Ascending aorta (tissue), 2 donors: ENCODE measurements at regions of chrX and their contacts with region 1.

Region 1: DNA sequence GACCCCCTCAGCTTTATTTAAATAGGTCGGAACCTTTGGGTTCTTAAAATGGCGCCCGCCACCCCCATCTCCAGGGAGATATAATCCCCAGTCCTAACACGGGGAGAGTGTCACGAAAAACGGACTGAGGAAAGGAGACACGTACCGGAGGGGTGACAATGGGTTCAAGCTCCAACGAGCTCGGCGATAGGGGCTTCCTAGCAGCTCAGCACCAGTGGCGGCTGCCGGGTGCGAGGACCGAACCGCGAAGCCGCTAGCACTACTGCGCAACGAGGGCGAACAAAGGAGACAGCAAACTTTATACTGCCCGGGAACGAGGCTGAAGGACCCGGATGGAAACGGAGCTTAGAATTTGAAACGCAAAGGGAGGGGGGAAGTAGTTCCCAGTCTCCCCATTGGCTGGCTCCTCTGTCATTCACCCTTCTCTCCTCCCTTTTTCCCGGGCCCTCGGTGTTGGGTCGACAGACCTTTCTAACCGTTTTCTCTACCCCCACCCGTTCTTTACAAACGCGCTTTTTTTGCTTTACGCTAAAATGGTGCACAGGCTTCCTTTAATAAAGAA is at the start of gene RBMX:
- DNase-seq: peak; percentile 46 to 93
- H3K4me3 ChIP-seq: peak within 1 kb of the TSS; percentile 70 to 72
- H3K27ac ChIP-seq: peak within 1 kb of the TSS; percentile 91 to 95
- H3K4me1 ChIP-seq: no peaks in the 10 kb centered on the region
- H3K27me3 ChIP-seq: no peaks in the 10 kb centered on the region
- CTCF ChIP-seq: no peak
- total RNA-seq, gene RBMX: 112 TPM

Region 2: DNA sequence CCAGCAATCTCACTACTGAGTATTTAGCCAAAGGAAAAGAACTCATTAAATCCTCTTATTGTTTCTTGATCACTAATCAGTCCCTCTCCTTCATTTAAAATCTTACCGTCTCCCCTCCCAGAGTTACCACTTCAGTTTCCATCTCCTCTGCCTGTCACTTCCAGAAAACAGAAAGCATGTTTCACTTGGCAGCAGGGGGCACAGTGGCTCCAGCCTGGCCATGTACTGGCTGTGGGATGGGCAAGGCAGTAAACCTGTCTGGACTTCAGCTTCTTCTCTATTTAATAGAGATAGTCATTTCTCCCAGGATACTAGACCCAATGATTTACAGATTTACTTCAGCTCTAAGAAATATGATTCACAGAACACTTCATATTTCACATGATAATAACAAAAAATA is 169.4 kb before region 1 on chrX:
- intact Hi-C with region 1: loop called (anchors 5 kb)
- DNase-seq: no peak
- H3K4me3 ChIP-seq: no peak overlapping the region
- H3K27ac ChIP-seq: no peak overlapping the region
- H3K4me1 ChIP-seq: no peaks in the 10 kb centered on the region
- H3K27me3 ChIP-seq: no peaks in the 10 kb centered on the region
- CTCF ChIP-seq: peak in 2 of 3 experiments; percentile 36 to 55

Region 3: DNA sequence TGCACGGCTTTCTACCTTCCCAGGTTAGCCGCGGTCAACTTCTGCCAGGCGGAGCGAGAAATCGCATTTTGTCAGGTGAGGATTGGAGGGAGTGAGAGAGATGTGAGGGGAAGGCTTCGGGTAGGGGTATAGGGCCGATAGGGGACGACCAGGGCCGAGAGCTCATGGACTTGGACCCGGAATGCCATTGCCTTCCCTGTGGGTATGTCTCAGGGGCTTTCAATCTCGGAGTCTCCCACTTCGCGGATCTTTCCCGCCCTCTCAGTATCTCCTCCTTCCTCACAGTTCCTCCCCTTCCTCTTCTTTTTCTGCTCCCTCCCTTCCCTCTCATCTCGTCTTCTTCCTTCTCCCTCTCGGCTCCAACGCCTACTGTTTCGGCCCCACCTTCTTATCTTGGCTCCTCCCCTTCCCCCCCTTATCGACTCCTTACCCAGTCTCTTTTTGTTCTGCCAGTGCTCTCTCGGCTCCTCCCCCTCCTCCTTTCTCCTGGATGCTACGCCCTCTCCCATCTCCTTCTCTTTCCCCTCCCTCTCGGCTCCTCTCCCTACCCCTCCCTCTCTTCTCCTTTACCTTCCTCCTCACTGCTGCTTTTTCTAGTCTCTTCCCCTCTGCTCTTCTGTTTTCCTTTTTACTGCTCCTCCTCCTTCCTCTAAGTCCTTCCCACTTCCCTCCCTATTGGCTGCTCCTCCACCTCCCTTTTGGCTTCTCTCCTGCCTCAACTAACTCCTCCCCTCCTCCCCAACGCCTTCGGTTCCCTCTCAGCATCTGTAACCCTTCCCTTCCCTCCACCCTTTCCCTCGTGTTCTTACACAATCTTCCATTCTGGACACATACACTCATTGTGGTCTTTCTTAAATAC is 29.4 kb after region 1 on chrX:
- intact Hi-C with region 1: loop called (anchors 1 kb)
- DNase-seq: peak; percentile 40 to 91
- H3K4me3 ChIP-seq: peak overlapping the region; percentile 69 to 72
- H3K27ac ChIP-seq: peak overlapping the region; percentile 78 to 85
- H3K4me1 ChIP-seq: no peaks in the 10 kb centered on the region
- H3K27me3 ChIP-seq: no peaks in the 10 kb centered on the region
- CTCF ChIP-seq: no peak